Psoas muscle (tissue), 8 donors: ENCODE measurements at regions of chr11 and their contacts with region 1.

Region 1: DNA sequence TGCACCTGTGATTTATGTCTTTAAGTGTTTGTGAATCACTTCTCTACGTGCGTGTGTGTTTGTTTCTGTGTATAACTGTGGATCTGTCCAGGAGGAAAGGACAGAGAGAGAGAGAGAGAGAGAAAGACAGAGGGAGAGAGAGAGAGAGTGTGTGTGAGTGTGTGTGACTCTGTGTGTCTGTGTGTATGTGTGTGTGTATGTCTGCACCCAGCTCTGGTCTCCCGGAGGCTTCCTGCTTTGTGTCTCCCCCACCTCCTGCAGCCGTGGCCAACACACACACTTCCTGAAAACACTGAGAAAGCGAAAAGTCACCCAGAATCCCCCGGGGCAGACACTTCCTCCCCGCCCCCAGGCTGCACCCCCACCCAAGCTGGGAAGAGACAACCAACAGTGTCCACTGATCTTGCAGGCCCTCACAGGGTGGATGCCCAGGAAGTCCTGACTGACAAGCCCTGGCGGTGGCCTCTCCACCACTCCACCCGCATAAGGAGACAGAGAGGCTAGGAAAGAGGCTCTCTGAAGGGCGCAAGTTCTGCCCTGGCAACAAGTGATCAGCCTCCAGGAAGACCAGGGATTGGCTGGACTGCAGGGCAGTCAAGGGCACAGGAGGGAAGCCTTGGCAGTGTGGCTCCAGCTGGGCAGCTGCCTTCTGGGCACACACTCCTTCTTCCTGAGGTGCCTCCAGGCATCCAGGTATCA is 30.0 kb downstream of the ARAP1 start:
- DNase-seq: peak; percentile 85 to 92
- ATAC-seq: peak; percentile 82 to 88 (median 86)
- H3K4me3 ChIP-seq: peak overlapping the region; percentile 76
- H3K27ac ChIP-seq: peak overlapping the region; percentile 89
- H3K4me1 ChIP-seq: peaks cover 46% of the 10 kb centered on the region
- H3K27me3 ChIP-seq: no peaks in the 10 kb centered on the region
- CTCF ChIP-seq: no peak

Region 2: GRCh38 chr11:72569966-72570892 is 152.0 kb before region 1 on chr11:
- intact Hi-C with region 1: no loop called
- DNase-seq: no peak
- ATAC-seq: no peak
- H3K4me3 ChIP-seq: no peak overlapping the region
- H3K27ac ChIP-seq: no peak overlapping the region
- H3K4me1 ChIP-seq: no peaks in the 10 kb centered on the region
- H3K27me3 ChIP-seq: peaks cover 0 to 2% (median 0%) of the 10 kb centered on the region in 3 donors
- CTCF ChIP-seq: no peak

Region 3: DNA sequence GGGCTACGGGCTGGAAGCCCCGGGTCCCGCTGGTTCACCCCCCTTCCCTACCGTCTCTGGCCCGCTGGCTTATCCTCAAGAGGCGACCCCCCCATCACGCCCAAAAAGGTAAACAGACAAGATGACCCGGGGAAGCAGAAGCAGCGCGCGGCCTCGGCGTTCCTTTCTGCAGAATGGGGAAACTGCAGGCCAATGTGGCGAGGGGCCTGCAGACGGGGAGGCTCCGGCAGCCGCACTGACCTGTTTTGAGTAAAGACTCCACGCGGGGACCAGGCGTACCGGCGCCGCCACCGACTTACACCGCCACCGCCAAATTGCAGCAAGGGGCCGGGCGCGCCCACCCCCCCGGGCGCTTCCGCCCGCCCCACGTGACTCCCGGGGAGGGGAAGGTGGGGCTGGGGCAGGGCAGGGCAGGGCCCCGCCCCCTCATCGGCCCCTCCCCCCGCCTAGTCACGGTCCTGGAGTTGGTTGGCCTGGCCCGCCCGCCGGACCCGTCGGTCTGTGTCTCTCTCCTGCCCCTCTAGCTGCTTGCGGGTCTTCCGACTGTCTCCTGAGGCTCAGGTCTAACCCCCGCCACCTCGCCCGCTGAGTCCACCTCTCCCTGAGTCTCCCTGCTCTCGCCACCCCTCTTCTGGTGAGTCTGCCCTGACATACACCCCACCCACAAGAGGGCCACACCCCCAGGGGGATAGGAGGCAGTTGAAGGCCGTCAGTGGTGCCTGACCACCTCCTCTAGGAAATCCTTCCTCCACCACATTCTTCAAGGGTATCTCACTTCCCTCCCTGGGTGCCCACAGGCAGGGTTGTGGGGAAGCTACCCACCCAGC is 30.1 kb after region 1 on chr11 and contains the start of gene ARAP1:
- intact Hi-C with region 1: loop called in 1 of 2 experiments (anchors 2 kb)
- DNase-seq: peak; percentile 81 to 87
- ATAC-seq: peak; percentile 89 to 96 (median 92)
- H3K4me3 ChIP-seq: peak within 1 kb of the TSS; percentile 84
- H3K27ac ChIP-seq: peak within 1 kb of the TSS; percentile 77
- H3K4me1 ChIP-seq: peaks cover 11% of the 10 kb centered on the region
- H3K27me3 ChIP-seq: no peaks in the 10 kb centered on the region
- CTCF ChIP-seq: no peak
- total RNA-seq, gene ARAP1: 16.0 to 27.5 (median 18.9) TPM

Region 4: DNA sequence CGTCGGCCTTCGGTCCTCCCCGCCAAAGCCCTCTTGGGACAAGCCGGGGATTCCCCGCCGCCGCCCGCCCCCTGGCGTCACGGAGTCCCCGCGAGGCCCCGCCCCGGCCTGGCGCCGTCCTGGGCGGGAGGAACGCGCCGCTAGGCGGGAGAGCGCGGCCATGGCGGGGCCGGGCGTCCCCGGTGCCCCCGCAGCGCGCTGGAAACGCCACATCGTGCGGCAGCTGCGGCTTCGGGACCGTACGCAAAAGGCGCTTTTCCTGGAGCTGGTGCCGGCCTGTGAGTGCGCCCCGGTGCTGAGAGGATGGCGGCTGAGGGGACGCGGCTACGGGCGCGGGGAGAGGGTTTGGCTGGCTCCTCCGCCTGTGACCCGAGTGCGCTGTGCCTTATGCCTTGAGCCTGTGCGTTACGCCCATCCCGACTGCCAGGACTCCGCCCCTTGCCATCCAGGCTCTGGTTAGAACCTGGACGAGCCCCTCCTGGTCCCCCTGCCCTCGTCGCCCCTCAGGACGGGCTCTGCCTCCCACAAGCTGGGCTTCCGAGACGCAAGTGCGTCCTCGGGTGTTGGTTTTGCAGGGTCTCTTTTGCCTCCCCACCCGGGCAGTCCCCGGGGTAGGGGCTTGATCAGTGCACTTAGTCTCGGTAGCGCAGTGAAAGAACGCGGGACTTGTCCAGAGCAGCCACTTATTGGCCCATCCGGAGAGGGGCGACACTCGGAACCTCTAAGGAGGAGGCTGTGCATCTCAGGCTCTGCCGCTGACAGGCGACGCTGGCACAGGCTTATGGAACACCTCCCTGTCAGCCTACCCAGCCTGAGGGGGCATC is 92.3 kb after region 1 on chr11 and contains the start of gene ATG16L2:
- intact Hi-C with region 1: loop called (anchors 5 kb)
- DNase-seq: peak; percentile 88 to 94
- ATAC-seq: peak; percentile 91 to 94 (median 94)
- H3K4me3 ChIP-seq: peak within 1 kb of the TSS; percentile 76
- H3K27ac ChIP-seq: peak within 1 kb of the TSS; percentile 97
- H3K4me1 ChIP-seq: peaks cover 26% of the 10 kb centered on the region
- H3K27me3 ChIP-seq: no peaks in the 10 kb centered on the region
- CTCF ChIP-seq: peak; percentile 19
- total RNA-seq, gene ATG16L2: 4.5 to 9.6 (median 5.4) TPM